Caco-2 (cell line): ENCODE measurements at regions of chr3 and their contacts with region 1.

Region 1: GRCh38 chr3:188154014-188154808 is at the start of gene LPP:
- DNase-seq: peak; percentile 79 to 86
- H3K4me3 ChIP-seq: peak within 1 kb of the TSS; percentile 68
- H3K4me3 Mint-ChIP-seq: peak within 1 kb of the TSS; percentile 84
- H3K27ac Mint-ChIP-seq: peak within 1 kb of the TSS; percentile 89
- H3K4me1 ChIP-seq: peaks cover 66% of the 10 kb centered on the region
- H3K4me1 Mint-ChIP-seq: peaks cover 48% of the 10 kb centered on the region
- H3K27me3 ChIP-seq: no peaks in the 10 kb centered on the region
- H3K27me3 Mint-ChIP-seq: no peaks in the 10 kb centered on the region
- CTCF ChIP-seq: peak in 1 of 2 experiments; percentile 27
- total RNA-seq, gene LPP: 120 and 147 TPM in 2 replicates

Region 2: DNA sequence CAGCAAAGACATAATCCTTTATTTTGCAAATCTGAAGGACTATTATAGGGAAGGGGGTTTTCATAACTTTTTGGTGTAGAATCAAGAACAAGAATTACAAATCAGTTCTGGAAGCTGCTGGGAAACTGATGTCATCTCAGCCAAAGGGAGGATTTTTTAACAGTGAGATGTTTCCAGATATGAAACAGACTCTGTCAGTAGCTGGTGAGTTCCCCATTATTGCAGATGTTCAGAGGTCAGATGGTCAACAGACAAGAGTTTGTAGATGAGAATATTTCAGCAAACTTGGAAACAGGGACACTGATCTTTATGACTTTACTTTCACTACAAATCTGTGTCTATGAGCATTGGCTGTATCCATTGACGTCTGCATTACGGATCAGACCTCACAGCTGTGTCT is 72.2 kb before region 1 on chr3:
- CTCF ChIA-PET with region 1: no interaction called
- POLR2A ChIA-PET with region 1: interaction called, 10 read pairs
- intact Hi-C with region 1: loop called (anchors 1 kb)
- DNase-seq: no peak
- H3K4me3 ChIP-seq: no peak overlapping the region
- H3K4me3 Mint-ChIP-seq: no peak overlapping the region
- H3K27ac Mint-ChIP-seq: no peak overlapping the region
- H3K4me1 ChIP-seq: peaks cover 34% of the 10 kb centered on the region
- H3K4me1 Mint-ChIP-seq: peaks cover 47% of the 10 kb centered on the region
- H3K27me3 ChIP-seq: no peaks in the 10 kb centered on the region
- H3K27me3 Mint-ChIP-seq: no peaks in the 10 kb centered on the region
- CTCF ChIP-seq: no peak

Region 3: DNA sequence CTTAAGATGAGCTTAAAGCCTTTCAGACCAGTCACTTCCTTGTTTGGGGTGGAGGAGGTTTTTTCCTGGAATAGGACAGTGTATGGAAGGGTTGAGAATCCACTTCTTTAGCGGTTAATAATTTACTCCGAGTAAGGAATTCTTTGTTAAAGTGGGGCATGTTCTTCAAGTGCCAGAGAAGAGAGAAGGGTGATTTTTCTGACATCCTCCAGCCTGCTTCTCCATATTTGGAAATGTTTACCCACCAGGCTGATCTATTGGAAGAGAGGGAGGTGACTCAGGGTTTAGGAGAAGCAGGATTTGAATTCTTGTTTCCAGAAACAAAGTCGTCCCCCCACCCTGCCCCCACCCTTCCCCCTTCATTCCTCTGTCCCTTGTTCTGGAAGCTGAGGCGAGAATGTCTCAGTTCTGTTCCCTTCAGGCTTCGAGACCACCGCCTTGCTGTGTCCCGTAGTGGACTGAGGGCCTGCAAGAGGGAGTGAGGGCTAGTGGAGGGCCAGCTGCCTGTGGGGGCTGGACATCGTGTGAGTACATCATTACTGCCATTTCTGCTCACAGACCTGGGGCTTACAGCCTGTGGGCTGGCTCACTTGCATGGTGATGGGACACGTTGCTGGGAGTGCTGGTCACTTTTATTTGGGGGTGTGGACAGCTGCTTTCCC is 58.2 kb after region 1 on chr3:
- CTCF ChIA-PET with region 1: no interaction called
- POLR2A ChIA-PET with region 1: no interaction called
- intact Hi-C with region 1: loop called (anchors 1 kb)
- DNase-seq: peak; percentile 55 to 60
- H3K4me3 ChIP-seq: no peak overlapping the region
- H3K4me3 Mint-ChIP-seq: peak overlapping the region; percentile 44
- H3K27ac Mint-ChIP-seq: peak overlapping the region; percentile 79
- H3K4me1 ChIP-seq: peaks cover 60% of the 10 kb centered on the region
- H3K4me1 Mint-ChIP-seq: peaks cover 35% of the 10 kb centered on the region
- H3K27me3 ChIP-seq: no peaks in the 10 kb centered on the region
- H3K27me3 Mint-ChIP-seq: no peaks in the 10 kb centered on the region
- CTCF ChIP-seq: no peak

Region 4: GRCh38 chr3:188286087-188286513 is 131.9 kb after region 1 on chr3:
- CTCF ChIA-PET with region 1: no interaction called
- POLR2A ChIA-PET with region 1: no interaction called
- intact Hi-C with region 1: loop called (anchors 10 kb)
- DNase-seq: no peak
- H3K4me3 ChIP-seq: no peak overlapping the region
- H3K4me3 Mint-ChIP-seq: no peak overlapping the region
- H3K27ac Mint-ChIP-seq: no peak overlapping the region
- H3K4me1 ChIP-seq: peaks cover 38% of the 10 kb centered on the region
- H3K4me1 Mint-ChIP-seq: peaks cover 45% of the 10 kb centered on the region
- H3K27me3 ChIP-seq: no peaks in the 10 kb centered on the region
- H3K27me3 Mint-ChIP-seq: no peaks in the 10 kb centered on the region
- CTCF ChIP-seq: no peak